CD4-positive, alpha-beta memory T cell (primary cell): ENCODE measurements at regions of chr2 and their contacts with region 1.

Region 1: GRCh38 chr2:172931918-172932520 is 143.6 kb upstream of the MAP3K20 start:
- DNase-seq: peak; percentile 36 to 41 (median 41)
- H3K4me3 ChIP-seq: no peak overlapping the region
- H3K4me3 Mint-ChIP-seq: no peak overlapping the region
- H3K27ac ChIP-seq: no peak overlapping the region
- H3K27ac Mint-ChIP-seq: no peak overlapping the region
- H3K4me1 ChIP-seq: no peaks in the 10 kb centered on the region
- H3K4me1 Mint-ChIP-seq: peaks cover 0 to 6% (median 2%) of the 10 kb centered on the region in 4 donors
- H3K27me3 ChIP-seq: no peaks in the 10 kb centered on the region
- H3K27me3 Mint-ChIP-seq: peaks cover 16 to 19% of the 10 kb centered on the region in 2 donors

Region 2: DNA sequence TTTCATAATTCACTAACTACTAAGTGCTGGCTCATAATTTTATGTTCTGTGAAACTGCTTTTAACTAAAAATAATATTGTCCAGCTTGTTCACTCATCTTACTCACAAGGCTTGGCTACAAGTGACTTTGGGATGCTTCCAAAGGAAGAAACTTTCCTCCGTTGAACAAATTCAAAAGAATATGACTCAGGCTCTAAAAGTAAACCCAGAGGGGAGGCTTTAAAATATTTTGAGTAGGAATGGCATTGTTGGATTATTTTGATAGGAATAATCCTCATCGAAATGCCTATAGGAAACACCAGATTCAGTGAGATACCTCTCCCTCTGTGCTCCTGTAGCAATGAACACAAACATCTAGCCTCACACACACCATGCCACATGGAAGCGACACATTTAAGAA is 1746.1 kb before region 1 on chr2:
- CTCF ChIA-PET with region 1: no interaction called
- POLR2A ChIA-PET with region 1: no interaction called
- intact Hi-C with region 1: no loop called
- DNase-seq: no peak
- H3K4me3 ChIP-seq: no peak overlapping the region
- H3K4me3 Mint-ChIP-seq: no peak overlapping the region
- H3K27ac ChIP-seq: no peak overlapping the region
- H3K27ac Mint-ChIP-seq: no peak overlapping the region
- H3K4me1 ChIP-seq: no peaks in the 10 kb centered on the region
- H3K4me1 Mint-ChIP-seq: peaks cover 0 to 3% (median under 1%) of the 10 kb centered on the region in 4 donors
- H3K27me3 ChIP-seq: no peaks in the 10 kb centered on the region
- H3K27me3 Mint-ChIP-seq: no peaks in the 10 kb centered on the region

Region 3: GRCh38 chr2:171574149-171574795 is 1357.7 kb before region 1 on chr2:
- CTCF ChIA-PET with region 1: interaction called, 10 read pairs
- POLR2A ChIA-PET with region 1: no interaction called
- intact Hi-C with region 1: no loop called
- DNase-seq: peak; percentile 65 to 79 (median 75)
- H3K4me3 ChIP-seq: no peak overlapping the region
- H3K4me3 Mint-ChIP-seq: peak overlapping the region in 6 of 8 donors; percentile 17 to 51 (median 30)
- H3K27ac ChIP-seq: no peak overlapping the region
- H3K27ac Mint-ChIP-seq: peak overlapping the region in 4 of 7 donors; percentile 10 to 60 (median 40)
- H3K4me1 ChIP-seq: no peaks in the 10 kb centered on the region
- H3K4me1 Mint-ChIP-seq: peaks cover 2 to 7% (median 7%) of the 10 kb centered on the region in 4 donors
- H3K27me3 ChIP-seq: no peaks in the 10 kb centered on the region
- H3K27me3 Mint-ChIP-seq: no peaks in the 10 kb centered on the region

Region 4: GRCh38 chr2:171703574-171704347 is 1228.3 kb before region 1 on chr2:
- CTCF ChIA-PET with region 1: no interaction called
- POLR2A ChIA-PET with region 1: no interaction called
- intact Hi-C with region 1: loop called (anchors 10 kb)
- DNase-seq: peak in 4 of 5 donors; percentile 19 to 33 (median 20)
- H3K4me3 ChIP-seq: no peak overlapping the region
- H3K4me3 Mint-ChIP-seq: no peak overlapping the region
- H3K27ac ChIP-seq: no peak overlapping the region
- H3K27ac Mint-ChIP-seq: peak overlapping the region in 6 of 7 donors; percentile 27 to 86 (median 75)
- H3K4me1 ChIP-seq: no peaks in the 10 kb centered on the region
- H3K4me1 Mint-ChIP-seq: peaks cover 6 to 12% (median 8%) of the 10 kb centered on the region in 4 donors
- H3K27me3 ChIP-seq: no peaks in the 10 kb centered on the region
- H3K27me3 Mint-ChIP-seq: no peaks in the 10 kb centered on the region

Region 5: GRCh38 chr2:172172513-172173173 is 759.4 kb before region 1 on chr2:
- CTCF ChIA-PET with region 1: no interaction called
- POLR2A ChIA-PET with region 1: no interaction called
- intact Hi-C with region 1: loop called (anchors 2 kb)
- DNase-seq: peak in 4 of 5 donors; percentile 57 to 63 (median 60)
- H3K4me3 ChIP-seq: peak overlapping the region in 1 of 2 donors; percentile 40
- H3K4me3 Mint-ChIP-seq: peak overlapping the region; percentile 54 to 83 (median 72)
- H3K27ac ChIP-seq: no peak overlapping the region
- H3K27ac Mint-ChIP-seq: no peak overlapping the region
- H3K4me1 ChIP-seq: peaks cover 3% of the 10 kb centered on the region
- H3K4me1 Mint-ChIP-seq: peaks cover 3 to 6% (median 4%) of the 10 kb centered on the region in 4 donors
- H3K27me3 ChIP-seq: no peaks in the 10 kb centered on the region
- H3K27me3 Mint-ChIP-seq: peaks cover 0 to 4% of the 10 kb centered on the region in 2 donors

Region 6: GRCh38 chr2:172736424-172737174 is 195.4 kb before region 1 on chr2:
- CTCF ChIA-PET with region 1: no interaction called
- POLR2A ChIA-PET with region 1: no interaction called
- intact Hi-C with region 1: no loop called
- DNase-seq: no peak
- H3K4me3 ChIP-seq: no peak overlapping the region
- H3K4me3 Mint-ChIP-seq: peak overlapping the region; percentile 52 to 81 (median 70)
- H3K27ac ChIP-seq: no peak overlapping the region
- H3K27ac Mint-ChIP-seq: no peak overlapping the region
- H3K4me1 ChIP-seq: peaks cover 5% of the 10 kb centered on the region
- H3K4me1 Mint-ChIP-seq: peaks cover 0 to 8% (median 6%) of the 10 kb centered on the region in 4 donors
- H3K27me3 ChIP-seq: peaks cover 15% of the 10 kb centered on the region
- H3K27me3 Mint-ChIP-seq: peaks cover 37 to 42% of the 10 kb centered on the region in 2 donors

Region 7: GRCh38 chr2:172806493-172806892 is 125.5 kb before region 1 on chr2:
- CTCF ChIA-PET with region 1: interaction called, 21 read pairs
- POLR2A ChIA-PET with region 1: no interaction called
- intact Hi-C with region 1: loop called (anchors 1 kb)
- DNase-seq: peak in 4 of 5 donors; percentile 4 to 9 (median 8)
- H3K4me3 ChIP-seq: no peak overlapping the region
- H3K4me3 Mint-ChIP-seq: no peak overlapping the region
- H3K27ac ChIP-seq: no peak overlapping the region
- H3K27ac Mint-ChIP-seq: no peak overlapping the region
- H3K4me1 ChIP-seq: no peaks in the 10 kb centered on the region
- H3K4me1 Mint-ChIP-seq: no peaks in the 10 kb centered on the region
- H3K27me3 ChIP-seq: no peaks in the 10 kb centered on the region
- H3K27me3 Mint-ChIP-seq: peaks cover 6 to 7% of the 10 kb centered on the region in 2 donors

Region 8: GRCh38 chr2:172914341-172915004 is 17.5 kb before region 1 on chr2:
- CTCF ChIA-PET with region 1: interaction called, 15 read pairs
- POLR2A ChIA-PET with region 1: no interaction called
- intact Hi-C with region 1: no loop called
- DNase-seq: no peak
- H3K4me3 ChIP-seq: no peak overlapping the region
- H3K4me3 Mint-ChIP-seq: peak overlapping the region in 1 of 8 donors; percentile 16
- H3K27ac ChIP-seq: no peak overlapping the region
- H3K27ac Mint-ChIP-seq: no peak overlapping the region
- H3K4me1 ChIP-seq: no peaks in the 10 kb centered on the region
- H3K4me1 Mint-ChIP-seq: peaks cover 0 to 6% (median 0%) of the 10 kb centered on the region in 4 donors
- H3K27me3 ChIP-seq: no peaks in the 10 kb centered on the region
- H3K27me3 Mint-ChIP-seq: peaks cover 4 to 7% of the 10 kb centered on the region in 2 donors

Region 9: GRCh38 chr2:172921532-172922236 is 10.3 kb before region 1 on chr2:
- CTCF ChIA-PET with region 1: interaction called, 17 read pairs
- POLR2A ChIA-PET with region 1: no interaction called
- intact Hi-C with region 1: no loop called
- DNase-seq: no peak
- H3K4me3 ChIP-seq: no peak overlapping the region
- H3K4me3 Mint-ChIP-seq: no peak overlapping the region
- H3K27ac ChIP-seq: no peak overlapping the region
- H3K27ac Mint-ChIP-seq: no peak overlapping the region
- H3K4me1 ChIP-seq: no peaks in the 10 kb centered on the region
- H3K4me1 Mint-ChIP-seq: no peaks in the 10 kb centered on the region
- H3K27me3 ChIP-seq: no peaks in the 10 kb centered on the region
- H3K27me3 Mint-ChIP-seq: peaks cover 6 to 11% of the 10 kb centered on the region in 2 donors